T-cell (primary cell): ENCODE measurements at regions of chr7 and their contacts with region 1.

Region 1: GRCh38 chr7:134432296-134433152 is 26.4 kb downstream of the AKR1B1 start:
- DNase-seq: peak; percentile 43 to 83 (median 58)
- ATAC-seq: peak; percentile 87 to 94 (median 91)
- H3K4me3 ChIP-seq: peak overlapping the region; percentile 35 to 45
- H3K4me3 Mint-ChIP-seq: peak overlapping the region; percentile 75 to 83 (median 79)
- H3K27ac ChIP-seq: peak overlapping the region; percentile 72
- H3K27ac Mint-ChIP-seq: peak overlapping the region; percentile 89 to 93
- H3K4me1 ChIP-seq: peaks cover 0 to 14% of the 10 kb centered on the region in 2 experiments
- H3K4me1 Mint-ChIP-seq: peaks cover 8 to 17% (median 15%) of the 10 kb centered on the region in 3 donors
- H3K27me3 ChIP-seq: no peaks in the 10 kb centered on the region
- H3K27me3 Mint-ChIP-seq: peaks cover 0 to 5% of the 10 kb centered on the region in 2 donors

Region 2: GRCh38 chr7:133797818-133798485 is 634.6 kb before region 1 on chr7:
- CTCF ChIA-PET with region 1: interaction called in 1 of 2 experiments, 11 read pairs
- POLR2A ChIA-PET with region 1: no interaction called
- DNase-seq: no peak
- ATAC-seq: no peak
- H3K4me3 ChIP-seq: no peak overlapping the region
- H3K4me3 Mint-ChIP-seq: no peak overlapping the region
- H3K27ac ChIP-seq: no peak overlapping the region
- H3K27ac Mint-ChIP-seq: no peak overlapping the region
- H3K4me1 ChIP-seq: no peaks in the 10 kb centered on the region
- H3K4me1 Mint-ChIP-seq: no peaks in the 10 kb centered on the region
- H3K27me3 ChIP-seq: no peaks in the 10 kb centered on the region
- H3K27me3 Mint-ChIP-seq: no peaks in the 10 kb centered on the region

Region 3: DNA sequence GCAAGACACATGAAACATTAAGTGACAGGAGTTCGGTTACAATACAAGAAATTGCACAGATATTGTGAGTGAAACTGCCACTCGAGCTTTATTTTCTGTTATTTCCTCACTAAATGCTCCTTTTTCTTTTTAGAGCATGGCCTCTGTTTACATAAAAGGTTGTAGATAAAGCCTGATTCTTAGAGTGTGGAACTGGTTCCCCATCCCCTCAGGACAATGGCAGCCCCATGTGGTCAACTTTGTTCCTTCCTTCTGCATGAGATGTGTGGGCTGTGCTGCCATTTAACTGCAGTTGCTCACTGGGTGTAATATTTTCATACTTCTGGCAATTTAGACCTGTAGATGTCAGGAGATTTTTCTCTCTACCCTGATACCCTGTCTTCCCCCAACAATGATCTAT is 235.2 kb before region 1 on chr7:
- CTCF ChIA-PET with region 1: no interaction called
- POLR2A ChIA-PET with region 1: no interaction called
- DNase-seq: no peak
- ATAC-seq: no peak
- H3K4me3 ChIP-seq: no peak overlapping the region
- H3K4me3 Mint-ChIP-seq: no peak overlapping the region
- H3K27ac ChIP-seq: no peak overlapping the region
- H3K27ac Mint-ChIP-seq: no peak overlapping the region
- H3K4me1 ChIP-seq: no peaks in the 10 kb centered on the region
- H3K4me1 Mint-ChIP-seq: no peaks in the 10 kb centered on the region
- H3K27me3 ChIP-seq: peaks cover 0 to 3% of the 10 kb centered on the region in 2 experiments
- H3K27me3 Mint-ChIP-seq: peaks cover 0 to 1% of the 10 kb centered on the region in 2 donors

Region 4: GRCh38 chr7:134307320-134307719 is 125.2 kb before region 1 on chr7:
- CTCF ChIA-PET with region 1: no interaction called
- POLR2A ChIA-PET with region 1: no interaction called
- DNase-seq: no peak
- ATAC-seq: no peak
- H3K4me3 ChIP-seq: no peak overlapping the region
- H3K4me3 Mint-ChIP-seq: no peak overlapping the region
- H3K27ac ChIP-seq: no peak overlapping the region
- H3K27ac Mint-ChIP-seq: no peak overlapping the region
- H3K4me1 ChIP-seq: no peaks in the 10 kb centered on the region
- H3K4me1 Mint-ChIP-seq: peaks cover 0 to 4% (median 4%) of the 10 kb centered on the region in 3 donors
- H3K27me3 ChIP-seq: no peaks in the 10 kb centered on the region
- H3K27me3 Mint-ChIP-seq: no peaks in the 10 kb centered on the region

Region 5: GRCh38 chr7:134514663-134515062 is 82.1 kb after region 1 on chr7:
- CTCF ChIA-PET with region 1: interaction called, 4 to 20 read pairs
- POLR2A ChIA-PET with region 1: no interaction called
- DNase-seq: peak in 11 of 35 experiments; percentile 3 to 78 (median 12)
- ATAC-seq: peak in 3 of 4 experiments; percentile 40 to 67 (median 64)
- H3K4me3 ChIP-seq: no peak overlapping the region
- H3K4me3 Mint-ChIP-seq: no peak overlapping the region
- H3K27ac ChIP-seq: no peak overlapping the region
- H3K27ac Mint-ChIP-seq: no peak overlapping the region
- H3K4me1 ChIP-seq: no peaks in the 10 kb centered on the region
- H3K4me1 Mint-ChIP-seq: peaks cover 0 to 6% (median 3%) of the 10 kb centered on the region in 3 donors
- H3K27me3 ChIP-seq: peaks cover 4 to 5% of the 10 kb centered on the region in 2 experiments
- H3K27me3 Mint-ChIP-seq: peaks cover 8 to 19% of the 10 kb centered on the region in 2 donors

Region 6: GRCh38 chr7:134547397-134548054 is 115.0 kb after region 1 on chr7:
- CTCF ChIA-PET with region 1: interaction called, 9 to 38 read pairs
- POLR2A ChIA-PET with region 1: no interaction called
- DNase-seq: peak; percentile 19 to 76 (median 57)
- ATAC-seq: peak; percentile 60 to 73 (median 68)
- H3K4me3 ChIP-seq: no peak overlapping the region
- H3K4me3 Mint-ChIP-seq: no peak overlapping the region
- H3K27ac ChIP-seq: no peak overlapping the region
- H3K27ac Mint-ChIP-seq: no peak overlapping the region
- H3K4me1 ChIP-seq: peaks cover 0 to 3% of the 10 kb centered on the region in 2 experiments
- H3K4me1 Mint-ChIP-seq: peaks cover 0 to 5% (median 3%) of the 10 kb centered on the region in 3 donors
- H3K27me3 ChIP-seq: peaks cover 0 to 4% of the 10 kb centered on the region in 2 experiments
- H3K27me3 Mint-ChIP-seq: peaks cover 10 to 29% of the 10 kb centered on the region in 2 donors

Region 7: GRCh38 chr7:134605973-134606923 is 173.7 kb after region 1 on chr7:
- CTCF ChIA-PET with region 1: interaction called, 4 to 28 read pairs
- POLR2A ChIA-PET with region 1: no interaction called
- DNase-seq: peak; percentile 8 to 80 (median 48)
- ATAC-seq: peak; percentile 82 to 86 (median 84)
- H3K4me3 ChIP-seq: no peak overlapping the region
- H3K4me3 Mint-ChIP-seq: peak overlapping the region; percentile 22 to 39 (median 28)
- H3K27ac ChIP-seq: no peak overlapping the region
- H3K27ac Mint-ChIP-seq: peak overlapping the region in 1 of 2 donors; percentile 17
- H3K4me1 ChIP-seq: no peaks in the 10 kb centered on the region
- H3K4me1 Mint-ChIP-seq: peaks cover 5 to 6% (median 6%) of the 10 kb centered on the region in 3 donors
- H3K27me3 ChIP-seq: peaks cover 0 to 10% of the 10 kb centered on the region in 2 experiments
- H3K27me3 Mint-ChIP-seq: peaks cover 8 to 24% of the 10 kb centered on the region in 2 donors